ENCODE measurements at regions of chr14 and their contacts with region 1.

Region 1: GRCh38 chr14:57871459-57872080 is 5.7 kb upstream of the SLC35F4 start:
- DNase-seq: peak; percentile 48
- H3K27ac ChIP-seq: no peak overlapping the region
- CTCF ChIP-seq: peak; percentile 58

Region 2: GRCh38 chr14:57692671-57693070 is 178.9 kb before region 1 on chr14:
- CTCF ChIA-PET with region 1: interaction called, 26 read pairs
- POLR2A ChIA-PET with region 1: no interaction called
- DNase-seq: peak; percentile 26
- H3K27ac ChIP-seq: no peak overlapping the region
- CTCF ChIP-seq: peak; percentile 60

Region 3: DNA sequence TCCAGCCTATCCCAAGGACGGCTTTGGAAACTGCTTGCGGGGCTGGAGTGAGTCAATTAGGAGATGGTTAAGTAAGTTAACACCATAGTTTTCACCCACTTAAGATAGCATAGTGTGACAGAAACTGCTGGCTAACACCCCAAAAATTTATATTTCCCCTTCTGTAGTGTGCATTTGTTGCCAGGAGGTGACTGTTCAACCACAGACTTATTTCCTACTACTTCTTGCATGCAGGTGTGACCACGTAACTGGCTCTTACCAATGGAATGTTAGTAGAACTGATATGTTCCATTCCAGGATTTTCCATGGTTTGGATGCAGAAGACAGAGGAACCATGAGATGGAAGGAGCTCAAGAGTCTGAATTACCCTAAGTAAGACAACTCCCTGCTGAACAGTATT is 47.2 kb after region 1 on chr14:
- CTCF ChIA-PET with region 1: no interaction called
- POLR2A ChIA-PET with region 1: no interaction called
- DNase-seq: no peak
- H3K27ac ChIP-seq: no peak overlapping the region
- CTCF ChIP-seq: no peak